ENCODE measurements at regions of chr7 and their contacts with region 1.

Region 1: DNA sequence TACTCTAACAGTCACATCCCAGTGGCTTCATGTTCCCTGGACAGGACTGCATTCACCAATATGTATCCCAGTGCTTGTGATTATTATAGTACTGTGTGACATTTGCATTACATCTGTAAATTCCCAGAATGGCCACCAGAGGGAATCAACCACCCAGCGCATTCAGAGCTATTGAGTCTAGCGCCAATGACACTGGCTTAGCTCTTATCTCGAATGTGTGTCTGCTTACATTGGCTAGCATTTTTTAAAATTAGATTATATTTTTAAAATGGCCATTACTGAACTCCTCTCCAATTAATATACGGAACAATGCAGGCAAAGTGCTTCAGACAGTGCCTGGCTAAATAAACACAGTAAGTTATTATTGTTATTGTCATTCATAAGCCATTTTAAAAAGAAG is 36.3 kb downstream of the TRIL start:
- DNase-seq: peak; percentile 48
- ATAC-seq: peak; percentile 89
- H3K4me3 Mint-ChIP-seq: no peak overlapping the region
- H3K27ac Mint-ChIP-seq: no peak overlapping the region
- H3K4me1 Mint-ChIP-seq: peaks cover 15% of the 10 kb centered on the region
- H3K27me3 Mint-ChIP-seq: peaks cover 7% of the 10 kb centered on the region

Region 2: DNA sequence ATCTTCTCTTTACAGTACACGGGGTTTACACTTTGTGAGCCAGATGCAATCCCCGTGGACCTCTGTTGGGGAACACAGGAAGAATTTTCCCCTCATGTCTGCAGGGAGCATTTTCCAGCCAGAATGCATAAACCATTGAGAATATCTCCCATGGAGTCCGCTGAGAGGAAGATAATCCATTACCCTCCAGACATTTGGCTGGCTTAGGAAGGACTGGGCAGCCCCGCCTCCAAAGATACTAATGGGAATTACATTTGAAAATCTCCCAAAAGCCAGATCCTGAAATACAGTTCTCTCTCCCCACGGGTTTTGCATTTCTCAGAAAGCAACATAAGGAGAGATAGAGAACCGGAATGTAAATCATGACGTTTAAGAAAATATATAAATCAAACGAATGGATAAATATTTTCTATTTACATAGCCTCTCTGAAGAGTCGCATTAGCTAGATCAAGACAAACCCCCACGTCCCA is 17.2 kb before region 1 on chr7:
- CTCF ChIA-PET with region 1: interaction called, 72 read pairs
- POLR2A ChIA-PET with region 1: no interaction called
- intact Hi-C with region 1: no loop called
- DNase-seq: no peak
- ATAC-seq: no peak
- H3K4me3 Mint-ChIP-seq: no peak overlapping the region
- H3K27ac Mint-ChIP-seq: no peak overlapping the region
- H3K4me1 Mint-ChIP-seq: no peaks in the 10 kb centered on the region
- H3K27me3 Mint-ChIP-seq: peaks cover 8% of the 10 kb centered on the region

Region 3: DNA sequence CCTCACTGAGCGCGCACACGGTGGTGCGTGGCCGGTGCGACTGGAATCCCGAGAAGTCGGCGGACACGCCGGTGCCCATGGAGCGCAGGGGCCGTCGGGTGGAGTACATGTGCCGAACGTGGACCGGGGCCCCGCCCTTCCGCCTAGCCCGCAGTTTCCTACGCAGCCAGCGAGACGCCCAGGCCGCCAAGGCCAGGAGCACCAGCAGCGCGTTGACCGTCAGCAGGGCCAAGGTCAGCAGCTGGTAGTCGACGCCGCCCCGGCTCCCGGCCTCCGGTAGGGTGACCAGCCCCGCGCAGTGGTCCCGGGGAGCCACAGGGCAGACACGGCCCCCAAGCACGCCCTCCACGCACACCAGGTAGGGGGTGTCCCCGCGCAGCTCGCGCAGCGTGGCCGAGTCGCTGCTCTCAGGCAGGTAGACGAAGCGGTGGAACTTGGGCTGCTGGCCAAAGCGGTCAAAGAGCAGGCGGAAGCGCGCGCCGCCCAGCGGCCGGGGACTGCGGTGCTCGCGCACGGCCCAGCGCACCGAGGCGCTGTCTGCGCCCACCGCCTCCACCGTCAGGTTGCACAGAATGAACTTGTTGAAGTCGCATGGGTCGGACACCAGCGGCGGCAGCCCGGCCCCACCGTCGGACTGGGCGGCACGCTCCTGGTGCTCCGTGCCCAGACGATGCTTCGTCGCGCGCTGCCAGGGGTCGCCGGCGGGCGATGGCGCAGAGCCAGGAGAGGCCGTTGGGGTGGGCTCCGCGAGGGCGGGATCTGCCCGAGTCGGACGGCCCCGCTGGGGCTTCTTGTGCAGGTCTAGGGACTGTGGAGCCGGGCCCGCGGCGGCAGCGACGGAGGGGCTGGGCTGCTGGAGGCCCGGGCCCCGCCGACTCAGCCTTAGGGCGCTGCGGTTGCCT is 34.1 kb after region 1 on chr7:
- CTCF ChIA-PET with region 1: interaction called, 26 read pairs
- POLR2A ChIA-PET with region 1: no interaction called
- intact Hi-C with region 1: no loop called
- DNase-seq: peak; percentile 67
- ATAC-seq: peak; percentile 53
- H3K4me3 Mint-ChIP-seq: peak overlapping the region; percentile 24
- H3K27ac Mint-ChIP-seq: no peak overlapping the region
- H3K4me1 Mint-ChIP-seq: peaks cover 7% of the 10 kb centered on the region
- H3K27me3 Mint-ChIP-seq: peaks cover 53% of the 10 kb centered on the region

Region 4: DNA sequence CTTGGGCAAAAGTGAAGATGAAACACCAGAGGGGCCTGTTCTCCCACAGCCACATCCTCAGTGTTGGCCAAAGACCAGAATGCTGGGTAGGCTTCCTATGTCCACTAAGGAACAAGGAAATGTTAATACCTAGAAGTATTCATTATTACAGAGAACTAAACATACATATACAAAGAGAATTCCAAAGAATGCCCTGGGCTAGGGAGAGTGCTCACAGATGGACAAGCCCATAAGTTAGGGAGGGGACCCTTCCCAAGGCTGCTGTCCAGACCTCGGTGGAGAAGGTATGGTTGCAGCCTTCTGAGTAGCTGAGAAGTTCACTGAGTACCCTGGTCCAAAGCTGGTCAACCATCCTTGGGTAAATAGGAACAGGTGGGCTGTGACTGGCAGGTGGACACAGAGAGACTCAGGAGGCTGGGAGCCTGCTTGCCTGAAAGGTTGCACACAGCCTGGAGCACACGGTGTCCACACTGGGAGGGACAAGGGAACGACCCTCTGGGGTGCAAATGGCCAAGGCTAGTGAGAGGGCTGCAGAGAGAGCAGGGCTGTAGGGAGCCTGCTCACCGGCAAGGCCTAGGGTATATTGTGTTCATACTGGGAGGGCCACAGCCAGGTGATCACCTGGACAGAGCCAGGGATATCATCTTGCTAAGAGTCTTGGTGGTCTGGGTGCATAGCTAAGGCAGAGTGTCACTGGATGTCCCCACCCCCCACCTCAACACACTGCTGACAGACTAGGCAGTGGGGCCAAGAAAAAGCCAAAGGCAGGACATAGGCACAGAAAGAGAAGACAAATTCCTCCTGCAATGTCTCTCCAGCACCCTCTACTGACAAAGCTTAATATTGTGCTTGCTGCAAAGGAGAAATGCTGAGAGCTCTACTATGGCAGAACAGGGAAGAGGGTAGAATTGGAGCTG is 184.2 kb after region 1 on chr7:
- CTCF ChIA-PET with region 1: interaction called, 241 read pairs
- POLR2A ChIA-PET with region 1: no interaction called
- intact Hi-C with region 1: loop called (anchors 1 kb)
- DNase-seq: peak; percentile 24
- ATAC-seq: peak; percentile 68
- H3K4me3 Mint-ChIP-seq: no peak overlapping the region
- H3K27ac Mint-ChIP-seq: no peak overlapping the region
- H3K4me1 Mint-ChIP-seq: no peaks in the 10 kb centered on the region
- H3K27me3 Mint-ChIP-seq: peaks cover 6% of the 10 kb centered on the region

Region 5: DNA sequence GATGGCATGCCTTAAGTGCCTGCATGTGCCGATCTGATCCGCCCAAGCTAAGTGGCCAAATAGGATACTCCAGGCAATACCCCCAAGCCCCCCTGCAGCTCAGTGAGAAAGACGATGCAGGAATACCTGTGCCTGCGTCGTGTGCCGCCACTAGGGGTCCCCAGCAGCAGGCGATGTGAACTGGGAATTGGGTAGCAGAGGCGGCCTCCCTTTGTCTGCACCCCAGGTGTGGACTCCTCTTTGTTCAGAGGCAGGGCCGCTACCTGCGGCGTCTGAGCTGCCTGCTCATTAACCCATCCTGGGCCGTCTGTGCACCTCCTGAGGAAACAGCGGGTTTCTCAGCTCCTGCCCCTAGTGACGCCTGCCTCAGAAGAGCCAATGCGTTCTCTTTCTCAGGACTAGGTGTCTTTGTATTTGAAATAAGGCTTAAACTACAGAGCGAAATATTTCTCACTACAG is 267.9 kb after region 1 on chr7:
- CTCF ChIA-PET with region 1: interaction called, 6 read pairs
- POLR2A ChIA-PET with region 1: no interaction called
- intact Hi-C with region 1: loop called in 1 of 2 experiments (anchors 5 kb)
- DNase-seq: peak; percentile 77
- ATAC-seq: peak; percentile 83
- H3K4me3 Mint-ChIP-seq: no peak overlapping the region
- H3K27ac Mint-ChIP-seq: no peak overlapping the region
- H3K4me1 Mint-ChIP-seq: no peaks in the 10 kb centered on the region
- H3K27me3 Mint-ChIP-seq: peaks cover 27% of the 10 kb centered on the region

Region 6: DNA sequence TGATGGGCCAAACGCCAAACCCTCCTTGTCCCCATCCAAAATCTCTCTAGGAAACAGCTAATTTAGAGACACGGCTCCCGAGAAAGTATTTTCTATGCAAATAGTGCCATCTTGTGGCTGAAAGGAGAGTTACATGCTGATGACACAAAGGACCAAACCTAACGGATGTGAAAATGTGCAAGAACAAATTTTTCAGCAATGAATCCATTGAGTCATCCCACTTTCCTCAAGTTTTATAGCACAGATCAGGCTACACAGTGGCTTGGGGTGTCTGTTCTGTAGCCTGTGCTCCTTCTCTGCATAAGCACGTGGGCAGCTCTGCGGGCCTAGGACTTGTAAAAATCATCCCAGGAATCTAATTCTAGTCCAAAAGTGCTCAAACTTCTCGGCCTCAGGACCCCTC is 487.0 kb after region 1 on chr7:
- CTCF ChIA-PET with region 1: interaction called, 60 read pairs
- POLR2A ChIA-PET with region 1: no interaction called
- intact Hi-C with region 1: loop called (anchors 1 kb)
- DNase-seq: peak; percentile 63
- ATAC-seq: peak; percentile 66
- H3K4me3 Mint-ChIP-seq: no peak overlapping the region
- H3K27ac Mint-ChIP-seq: no peak overlapping the region
- H3K4me1 Mint-ChIP-seq: no peaks in the 10 kb centered on the region
- H3K27me3 Mint-ChIP-seq: no peaks in the 10 kb centered on the region

Measured in activated CD4-positive, alpha-beta T cell treated with anti-CD3 and anti-CD28 coated beads for 36 hours (primary cell).